GM10248 (cell line): ENCODE measurements at regions of chrX and their contacts with region 1.

Region 1: GRCh38 chrX:12080265-12080664 is 58.0 kb upstream of the FRMPD4 start:
- DNase-seq: peak; percentile 10
- CTCF ChIP-seq: peak; percentile 30

Region 2: GRCh38 chrX:12701628-12702027 is 621.4 kb after region 1 on chrX:
- CTCF ChIA-PET with region 1: interaction called, 11 read pairs
- POLR2A ChIA-PET with region 1: no interaction called
- DNase-seq: peak; percentile 42
- CTCF ChIP-seq: peak; percentile 55